Activated naive CD4-positive, alpha-beta T cell treated with anti-CD3 and anti-CD28 coated beads for 36 hours (primary cell): ENCODE measurements at regions of chr1 and their contacts with region 1.

Region 1: DNA sequence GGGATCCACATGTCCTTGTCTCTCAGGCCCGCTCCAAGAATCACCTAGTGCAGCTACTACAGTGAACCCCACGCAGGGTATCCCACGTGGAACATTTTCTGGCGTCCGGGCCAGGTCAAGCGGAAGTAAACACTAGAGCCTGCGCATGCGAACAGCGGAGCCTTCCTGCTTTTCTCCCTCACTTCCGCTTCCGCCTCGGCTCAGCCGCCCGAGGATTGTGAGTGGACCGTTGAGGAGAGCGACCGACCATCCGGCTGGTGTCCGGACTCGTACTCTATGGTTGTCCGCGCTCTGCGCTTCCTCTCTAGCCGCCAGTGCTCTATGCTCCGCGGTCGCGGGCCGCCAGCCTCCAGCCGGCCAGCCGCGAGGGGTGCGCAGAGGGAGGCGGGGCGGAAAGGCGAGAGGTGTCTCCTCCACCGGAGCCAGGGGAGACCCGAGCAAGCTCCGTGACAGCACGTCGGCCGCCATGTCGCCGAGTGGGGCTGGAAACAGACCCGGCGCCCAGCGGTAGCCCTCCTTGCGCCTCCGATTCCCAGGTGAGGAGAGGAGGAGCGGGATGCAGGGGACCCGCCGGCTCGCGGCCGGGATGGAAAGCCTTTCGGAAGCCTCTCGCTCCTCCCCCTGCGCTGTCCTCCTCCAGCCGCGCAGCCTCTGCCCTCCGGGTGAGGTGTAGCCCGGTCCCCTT is at the starts of genes CNST and TFB2M:
- DNase-seq: peak; percentile 96
- H3K4me3 Mint-ChIP-seq: peak within 1 kb of the TSS; percentile 96
- H3K27ac Mint-ChIP-seq: peak within 1 kb of the TSS; percentile 94
- H3K4me1 Mint-ChIP-seq: peaks cover 43% of the 10 kb centered on the region
- H3K27me3 Mint-ChIP-seq: no peaks in the 10 kb centered on the region
- total RNA-seq, gene CNST: 22.1 to 25.3 TPM
- total RNA-seq, gene TFB2M: 10.8 to 11.1 TPM

Region 2: DNA sequence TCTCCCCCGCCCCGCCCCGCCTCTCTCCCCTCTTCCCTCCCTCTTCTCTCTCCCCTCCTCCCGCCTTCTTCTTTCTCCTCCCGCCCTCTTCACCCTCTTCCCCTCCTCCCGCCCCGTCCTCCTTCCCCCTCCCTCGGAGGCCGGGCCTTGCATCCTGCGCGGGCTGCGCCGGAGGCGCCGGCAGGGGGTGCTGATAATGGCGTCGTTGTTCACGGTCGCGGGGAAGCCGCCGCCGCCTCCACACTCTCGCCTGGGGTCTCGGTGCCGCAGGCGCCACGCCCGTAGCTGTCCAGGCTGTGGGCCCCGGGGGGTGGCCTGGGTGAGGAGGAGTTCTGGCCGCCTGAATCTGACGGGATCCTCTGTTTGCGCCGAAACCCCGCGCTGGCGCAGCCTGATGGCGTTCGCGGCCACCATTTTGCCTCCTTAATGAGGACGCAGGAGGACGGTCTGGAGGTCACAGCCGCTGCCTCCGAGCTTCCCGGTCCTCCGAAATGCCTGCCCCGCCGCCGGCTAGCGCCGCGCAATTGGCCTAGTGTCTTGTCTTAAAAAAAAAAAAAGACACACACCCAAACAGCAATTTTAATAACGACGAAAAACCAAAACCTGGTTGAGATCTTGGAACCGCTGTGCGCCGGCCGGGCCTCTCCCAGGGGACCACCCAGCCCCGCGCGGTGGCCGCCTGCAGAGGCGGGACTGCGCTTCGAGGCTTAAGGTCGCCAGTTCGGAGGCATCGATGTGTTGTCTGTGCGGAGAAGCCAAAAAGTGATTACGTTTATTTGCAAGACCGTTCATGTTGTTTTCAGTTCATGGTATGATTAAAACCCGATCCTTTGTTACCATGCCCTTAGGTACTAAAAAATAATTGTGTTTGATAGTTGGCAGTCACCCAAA is 1595.4 kb before region 1 on chr1:
- CTCF ChIA-PET with region 1: no interaction called
- intact Hi-C with region 1: loop called (anchors 2 kb)
- DNase-seq: peak; percentile 93
- H3K4me3 Mint-ChIP-seq: peak overlapping the region; percentile 93
- H3K27ac Mint-ChIP-seq: peak overlapping the region; percentile 98
- H3K4me1 Mint-ChIP-seq: peaks cover 11% of the 10 kb centered on the region
- H3K27me3 Mint-ChIP-seq: no peaks in the 10 kb centered on the region

Region 3: DNA sequence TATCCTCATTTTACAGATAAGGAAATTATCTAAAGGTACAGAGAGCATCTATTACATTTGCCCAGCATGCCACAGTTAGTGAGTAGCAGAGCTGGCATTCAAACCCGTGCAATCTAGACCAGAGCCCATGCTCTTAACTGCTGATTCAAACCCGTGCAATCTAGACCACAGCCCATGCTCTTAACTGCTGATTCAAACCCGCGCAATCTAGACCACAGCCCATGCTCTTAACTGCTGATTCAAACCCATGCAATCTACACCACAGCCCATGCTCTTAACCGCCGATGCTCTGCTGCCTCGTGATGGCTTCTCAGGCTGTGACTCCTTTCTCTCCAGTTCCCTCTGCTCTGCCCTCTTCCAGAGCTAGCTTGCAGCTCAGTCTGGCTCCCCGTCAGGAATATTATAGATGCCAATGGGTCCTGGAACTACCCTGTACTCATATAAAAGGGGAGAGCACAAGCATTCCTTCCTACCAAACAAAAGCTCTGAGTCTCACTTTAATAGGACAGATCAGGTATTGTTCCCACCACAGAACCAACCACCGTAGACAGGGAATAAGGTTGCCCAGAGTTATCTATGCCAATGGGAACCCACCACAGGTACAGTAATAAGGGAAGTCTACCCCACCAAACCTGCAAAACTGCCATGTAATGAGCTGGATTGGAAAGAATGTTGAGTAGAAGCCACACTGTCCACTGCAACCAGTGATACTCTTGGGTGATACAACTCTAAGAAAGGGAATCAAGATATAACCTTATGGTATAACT is 137.5 kb before region 1 on chr1:
- CTCF ChIA-PET with region 1: no interaction called
- intact Hi-C with region 1: no loop called
- DNase-seq: no peak
- H3K4me3 Mint-ChIP-seq: no peak overlapping the region
- H3K27ac Mint-ChIP-seq: no peak overlapping the region
- H3K4me1 Mint-ChIP-seq: no peaks in the 10 kb centered on the region
- H3K27me3 Mint-ChIP-seq: no peaks in the 10 kb centered on the region

Region 4: DNA sequence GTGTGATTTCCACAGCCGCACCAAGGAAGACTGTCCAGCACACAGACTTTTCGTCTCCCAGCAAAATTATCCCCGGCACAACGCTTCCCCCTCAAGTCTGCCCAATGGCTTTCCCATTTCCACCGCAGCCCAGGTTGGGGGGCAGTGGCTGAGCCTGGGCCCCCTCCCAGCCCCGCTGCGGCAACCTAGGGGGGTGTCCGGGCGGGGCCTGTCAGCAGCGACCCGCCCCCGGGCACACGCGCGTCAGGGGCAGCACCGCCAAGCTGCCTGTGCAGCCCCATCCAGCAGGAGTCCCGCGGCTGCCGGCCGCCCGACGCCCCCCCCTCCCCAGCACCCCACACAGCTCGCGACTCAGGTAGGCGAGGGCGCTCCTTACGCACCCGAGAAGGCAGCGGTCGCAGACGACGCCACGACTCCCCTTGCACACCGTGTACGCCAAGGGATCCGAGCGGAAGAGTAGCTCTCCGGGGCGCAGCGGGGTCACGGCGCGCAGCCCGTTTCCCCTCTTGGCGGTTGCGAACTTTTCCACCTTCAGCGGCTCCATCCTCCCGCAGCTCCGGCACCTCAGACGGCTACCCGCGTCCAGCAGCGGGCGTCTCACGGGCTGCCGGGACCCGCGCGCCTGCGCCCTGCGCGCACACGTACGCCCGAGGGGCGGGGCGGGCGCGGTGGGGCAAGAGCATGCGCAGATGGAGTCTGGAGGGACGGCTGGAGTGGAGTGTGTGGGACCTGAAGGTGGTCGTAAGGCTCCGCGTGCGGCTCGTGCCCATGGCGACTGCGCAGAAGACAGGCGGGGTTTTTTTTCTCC is 59.4 kb before region 1 on chr1 and contains the start of gene SMYD3:
- CTCF ChIA-PET with region 1: no interaction called
- intact Hi-C with region 1: loop called (anchors 1 kb)
- DNase-seq: peak; percentile 73
- H3K4me3 Mint-ChIP-seq: peak within 1 kb of the TSS; percentile 95
- H3K27ac Mint-ChIP-seq: peak within 1 kb of the TSS; percentile 89
- H3K4me1 Mint-ChIP-seq: peaks cover 15% of the 10 kb centered on the region
- H3K27me3 Mint-ChIP-seq: no peaks in the 10 kb centered on the region
- total RNA-seq, gene SMYD3: 21.3 to 21.4 TPM

Region 5: GRCh38 chr1:246587606-246588005 is 21.3 kb after region 1 on chr1:
- CTCF ChIA-PET with region 1: no interaction called
- intact Hi-C with region 1: loop called (anchors 2 kb)
- DNase-seq: no peak
- H3K4me3 Mint-ChIP-seq: no peak overlapping the region
- H3K27ac Mint-ChIP-seq: peak overlapping the region; percentile 24
- H3K4me1 Mint-ChIP-seq: peaks cover 57% of the 10 kb centered on the region
- H3K27me3 Mint-ChIP-seq: no peaks in the 10 kb centered on the region

Region 6: GRCh38 chr1:246724016-246724730 is 157.9 kb after region 1 on chr1 and contains the start of gene SCCPDH:
- CTCF ChIA-PET with region 1: no interaction called
- intact Hi-C with region 1: loop called (anchors 2 kb)
- DNase-seq: peak; percentile 64
- H3K4me3 Mint-ChIP-seq: peak within 1 kb of the TSS; percentile 88
- H3K27ac Mint-ChIP-seq: peak within 1 kb of the TSS; percentile 66
- H3K4me1 Mint-ChIP-seq: peaks cover 10% of the 10 kb centered on the region
- H3K27me3 Mint-ChIP-seq: no peaks in the 10 kb centered on the region
- total RNA-seq, gene SCCPDH: 23.8 to 24.3 TPM

Region 7: GRCh38 chr1:247210376-247211117 is 644.3 kb after region 1 on chr1:
- CTCF ChIA-PET with region 1: no interaction called
- intact Hi-C with region 1: loop called (anchors 5 kb)
- DNase-seq: peak; percentile 98
- H3K4me3 Mint-ChIP-seq: peak overlapping the region; percentile 90
- H3K27ac Mint-ChIP-seq: peak overlapping the region; percentile 93
- H3K4me1 Mint-ChIP-seq: peaks cover 56% of the 10 kb centered on the region
- H3K27me3 Mint-ChIP-seq: no peaks in the 10 kb centered on the region